OCI-LY7 (cell line): ENCODE measurements at regions of chr12 and their contacts with region 1.

Region 1: DNA sequence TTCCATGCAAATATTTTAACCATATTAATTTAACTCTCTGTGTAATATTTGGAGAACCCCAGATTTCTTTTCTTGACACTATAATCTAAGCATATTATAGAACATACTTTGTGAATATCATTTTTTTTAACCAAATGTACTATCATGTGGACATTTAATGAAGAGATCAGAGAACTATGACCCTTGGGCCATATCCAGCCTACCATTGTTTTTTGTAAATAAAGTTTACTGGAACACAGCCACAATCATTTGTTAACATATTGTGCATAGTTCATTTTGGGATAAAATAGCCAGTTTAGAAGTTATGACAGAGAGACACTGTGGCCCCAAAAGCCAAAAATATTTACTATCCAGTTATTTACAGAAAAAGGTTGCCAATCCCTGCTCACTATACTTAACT is 338.2 kb downstream of the TMEM117 start:
- DNase-seq: no peak
- H3K4me3 ChIP-seq: no peak overlapping the region
- H3K27ac ChIP-seq: no peak overlapping the region
- H3K4me1 ChIP-seq: no peaks in the 10 kb centered on the region
- CTCF ChIP-seq: no peak

Region 2: DNA sequence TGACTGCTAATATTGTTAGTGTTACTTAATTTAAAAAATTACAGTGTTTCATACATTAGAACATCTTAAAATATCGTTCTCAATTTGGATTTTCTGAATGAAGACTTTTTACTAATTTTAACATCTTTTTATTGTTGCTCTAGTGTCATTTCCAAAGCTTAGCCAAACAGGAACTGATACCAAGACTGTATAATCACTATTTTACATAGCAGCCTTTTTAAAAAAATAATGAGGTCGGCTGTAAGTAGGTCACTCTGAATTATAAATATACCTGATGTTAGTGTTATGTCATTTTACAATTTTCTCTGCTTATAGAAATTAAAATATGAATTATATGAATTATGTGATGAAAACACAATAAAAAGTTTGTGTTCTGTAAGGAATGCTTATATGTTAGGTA is 16.7 kb before region 1 on chr12:
- CTCF ChIA-PET with region 1: no interaction called
- POLR2A ChIA-PET with region 1: no interaction called
- intact Hi-C with region 1: no loop called
- DNase-seq: no peak
- H3K4me3 ChIP-seq: no peak overlapping the region
- H3K27ac ChIP-seq: no peak overlapping the region
- H3K4me1 ChIP-seq: no peaks in the 10 kb centered on the region
- CTCF ChIP-seq: no peak

Region 3: DNA sequence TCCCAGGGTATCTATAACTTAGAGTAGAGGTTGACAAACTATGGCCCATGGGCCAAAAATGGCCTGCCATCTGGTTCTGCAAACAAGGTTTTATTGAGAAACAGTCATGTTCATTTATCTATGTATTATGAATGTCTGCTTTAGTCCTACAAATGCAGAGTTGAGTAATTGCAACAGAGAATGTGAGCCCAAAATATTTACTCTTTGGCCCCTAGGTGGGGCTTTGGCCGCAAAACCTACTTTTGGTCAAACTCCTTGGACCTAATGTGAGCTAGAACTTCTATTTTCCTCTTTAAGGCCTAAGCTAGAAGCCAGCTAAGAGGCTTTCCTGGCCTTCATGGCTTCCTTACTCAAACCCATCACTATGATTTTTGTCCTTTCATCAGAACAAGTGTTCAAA is 323.0 kb after region 1 on chr12:
- CTCF ChIA-PET with region 1: no interaction called
- POLR2A ChIA-PET with region 1: no interaction called
- intact Hi-C with region 1: loop called (anchors 5 kb)
- DNase-seq: peak; percentile 12
- H3K4me3 ChIP-seq: no peak overlapping the region
- H3K27ac ChIP-seq: no peak overlapping the region
- H3K4me1 ChIP-seq: no peaks in the 10 kb centered on the region
- CTCF ChIP-seq: peak; percentile 65